ENCODE measurements at regions of chr2 and their contacts with region 1.

Region 1: GRCh38 chr2:120699292-120699691 is 36.4 kb upstream of the GLI2 start:
- DNase-seq: no peak
- H3K4me3 ChIP-seq: no peak overlapping the region
- H3K27ac ChIP-seq: no peak overlapping the region
- H3K4me1 ChIP-seq: peaks cover 0 to 10% (median 2%) of the 10 kb centered on the region in 4 donors
- H3K27me3 ChIP-seq: peaks cover 0 to 46% (median 23%) of the 10 kb centered on the region in 3 donors
- CTCF ChIP-seq: no peak
- EP300 ChIP-seq: no peak
- POLR2A ChIP-seq: no peak

Region 2: DNA sequence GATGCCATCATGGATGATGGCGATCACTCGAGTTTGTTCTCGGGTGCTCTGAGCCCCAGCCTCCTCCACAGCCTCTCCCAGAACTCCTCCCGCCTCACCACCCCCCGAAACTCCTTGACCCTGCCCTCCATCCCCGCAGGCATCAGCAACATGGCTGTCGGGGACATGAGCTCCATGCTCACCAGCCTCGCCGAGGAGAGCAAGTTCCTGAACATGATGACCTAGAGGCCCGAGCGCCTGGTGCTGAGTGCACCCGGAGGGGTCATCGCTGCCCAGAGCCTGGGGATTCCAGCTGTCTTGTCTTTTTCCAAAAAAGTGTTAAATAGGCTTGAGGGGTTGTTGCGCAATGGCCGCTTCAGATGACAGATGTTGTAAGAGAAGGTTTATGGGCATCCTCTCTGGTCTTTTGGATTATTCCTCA is 291.2 kb after region 1 on chr2:
- intact Hi-C with region 1: no loop called
- DNase-seq: peak in 1 of 2 donors; percentile 23
- H3K4me3 ChIP-seq: no peak overlapping the region
- H3K27ac ChIP-seq: no peak overlapping the region
- H3K4me1 ChIP-seq: no peaks in the 10 kb centered on the region
- H3K27me3 ChIP-seq: no peaks in the 10 kb centered on the region
- CTCF ChIP-seq: no peak
- EP300 ChIP-seq: no peak
- POLR2A ChIP-seq: no peak

Region 3: GRCh38 chr2:121066526-121066925 is 367.2 kb after region 1 on chr2:
- intact Hi-C with region 1: loop called (anchors 5 kb)
- DNase-seq: no peak
- H3K4me3 ChIP-seq: no peak overlapping the region
- H3K27ac ChIP-seq: no peak overlapping the region
- H3K4me1 ChIP-seq: peaks cover 0 to 7% (median 3%) of the 10 kb centered on the region in 4 donors
- H3K27me3 ChIP-seq: peaks cover 0 to 35% (median 0%) of the 10 kb centered on the region in 3 donors
- CTCF ChIP-seq: no peak
- EP300 ChIP-seq: no peak
- POLR2A ChIP-seq: no peak

Measured in stomach (tissue), 19 donors.